Calu3 (cell line): ENCODE measurements at regions of chr1 and their contacts with region 1.

Region 1: DNA sequence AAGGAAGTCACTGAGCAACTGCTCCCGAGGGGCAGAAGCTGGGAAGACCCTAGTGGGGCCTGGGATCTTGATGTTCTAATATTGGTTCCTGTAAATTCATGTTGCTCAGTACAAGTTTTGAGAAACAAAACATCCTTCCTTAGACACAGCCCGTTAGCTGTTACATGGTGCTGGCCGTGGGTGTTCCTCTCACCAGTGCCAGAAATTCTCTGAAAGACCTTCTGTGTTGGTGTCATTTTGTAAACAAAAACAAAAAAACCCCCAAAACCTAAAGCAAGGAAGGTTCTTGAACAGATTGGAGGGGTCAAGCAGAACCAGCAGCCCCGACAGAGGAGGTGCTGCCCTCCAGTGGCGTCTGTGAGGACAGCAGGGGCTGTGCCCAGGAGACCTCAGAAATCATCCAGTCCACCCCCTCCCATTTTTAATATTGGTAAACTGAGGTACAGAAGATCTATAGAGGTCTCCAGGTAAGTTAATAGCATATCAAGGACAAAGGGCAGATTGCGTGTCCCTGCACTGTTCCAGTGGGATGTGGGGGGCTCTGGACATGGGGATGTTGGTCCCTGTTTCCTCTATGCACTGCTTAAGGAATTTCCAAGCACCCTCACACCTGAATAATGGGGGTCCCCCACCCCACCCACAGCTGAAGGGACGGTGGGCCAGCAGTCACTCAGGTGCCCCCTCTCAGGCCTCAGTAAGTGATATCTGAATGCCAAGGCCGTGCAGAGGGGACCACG is 38.2 kb downstream of the SLC2A7 start:
- DNase-seq: peak; percentile 65
- H3K4me3 Mint-ChIP-seq: no peak overlapping the region
- H3K27ac Mint-ChIP-seq: no peak overlapping the region
- H3K4me1 Mint-ChIP-seq: no peaks in the 10 kb centered on the region
- H3K27me3 Mint-ChIP-seq: no peaks in the 10 kb centered on the region
- CTCF ChIP-seq: peak; percentile 68

Region 2: GRCh38 chr1:8913111-8913856 is 74.8 kb before region 1 on chr1:
- CTCF ChIA-PET with region 1: interaction called, 3 read pairs
- intact Hi-C with region 1: loop called (anchors 1 kb)
- DNase-seq: no peak
- H3K4me3 Mint-ChIP-seq: no peak overlapping the region
- H3K27ac Mint-ChIP-seq: no peak overlapping the region
- H3K4me1 Mint-ChIP-seq: peaks cover 5% of the 10 kb centered on the region
- H3K27me3 Mint-ChIP-seq: no peaks in the 10 kb centered on the region
- CTCF ChIP-seq: no peak